H1 (cell line): ENCODE measurements at regions of chr2 and their contacts with region 1.

Region 1: GRCh38 chr2:46984642-46985476 is 69.3 kb upstream of the MCFD2 start:
- DNase-seq: no peak
- H3K4me3 ChIP-seq: no peak overlapping the region
- H3K27ac ChIP-seq: no peak overlapping the region
- H3K4me1 ChIP-seq: peaks cover 0 to 13% (median 5%) of the 10 kb centered on the region in 4 experiments; a peak in 4 of 7 replicates
- H3K27me3 ChIP-seq: no peaks in the 10 kb centered on the region
- CTCF ChIP-seq: no peak
- EP300 ChIP-seq: no peak
- POLR2A ChIP-seq: no peak
- RAD21 ChIP-seq: no peak

Region 2: DNA sequence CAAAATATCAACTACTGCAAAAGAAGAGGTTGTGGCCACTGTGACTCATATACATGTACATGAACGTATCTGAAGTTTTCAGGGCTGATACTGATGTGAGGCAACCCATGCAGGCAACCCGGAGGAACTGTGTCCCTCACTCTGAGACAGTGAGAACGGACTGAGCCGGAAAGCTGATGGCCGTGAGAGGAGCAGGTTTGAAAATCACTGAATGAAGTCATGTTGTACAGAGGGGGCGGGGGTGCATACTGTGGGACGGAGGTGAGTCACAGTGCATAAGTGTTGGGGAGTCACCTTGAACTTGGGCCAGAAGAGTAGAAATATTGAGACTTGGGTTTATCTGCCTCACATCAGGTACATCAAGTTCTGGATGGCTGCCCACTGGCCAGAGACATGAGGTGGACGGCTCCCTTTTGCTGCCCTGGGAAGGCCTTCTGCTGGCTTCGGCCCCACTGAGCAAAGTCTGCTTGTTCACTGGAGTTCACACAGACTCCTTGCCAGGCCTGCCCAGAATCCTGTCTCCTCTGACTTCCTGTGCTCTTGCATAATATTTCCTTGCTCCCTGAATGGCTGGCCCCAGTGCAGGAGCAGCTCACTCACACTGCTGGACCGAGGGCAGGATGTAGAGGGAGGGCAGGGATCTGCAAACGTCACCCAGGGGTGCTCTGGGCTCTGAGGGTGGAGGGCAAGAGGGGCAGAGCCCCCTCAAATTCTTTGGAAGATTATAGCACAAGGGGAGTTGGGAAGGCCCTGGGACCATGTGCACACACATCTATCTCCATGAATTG is 669.6 kb before region 1 on chr2:
- CTCF ChIA-PET with region 1: no interaction called
- POLR2A ChIA-PET with region 1: no interaction called
- DNase-seq: no peak
- H3K4me3 ChIP-seq: no peak overlapping the region
- H3K27ac ChIP-seq: no peak overlapping the region
- H3K4me1 ChIP-seq: peaks cover 0 to 2% (median 0%) of the 10 kb centered on the region in 4 experiments; a peak in 1 of 7 replicates
- H3K27me3 ChIP-seq: peaks cover 0 to 1% (median 0%) of the 10 kb centered on the region in 4 experiments; a peak in 1 of 7 replicates
- CTCF ChIP-seq: no peak
- EP300 ChIP-seq: no peak
- POLR2A ChIP-seq: no peak
- RAD21 ChIP-seq: no peak

Region 3: DNA sequence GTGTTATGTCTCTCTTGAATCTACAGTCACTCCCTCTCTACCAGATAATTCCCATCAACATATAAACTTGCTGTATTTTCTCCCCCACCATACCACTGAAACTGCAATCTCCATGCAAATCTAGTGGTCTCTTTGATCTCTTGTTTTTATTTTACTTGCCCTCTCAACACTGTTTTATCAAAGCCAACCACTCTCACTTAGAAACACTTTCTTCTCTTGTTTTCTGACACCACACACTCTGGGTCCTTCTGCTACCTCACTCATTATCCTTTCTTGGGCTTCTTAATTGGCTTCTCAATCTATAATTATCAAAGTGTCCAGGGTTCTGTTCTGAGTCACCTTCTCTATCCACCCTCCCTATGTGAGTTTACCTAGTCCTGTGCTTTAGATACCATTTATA is 67.2 kb before region 1 on chr2:
- CTCF ChIA-PET with region 1: interaction called, 13 read pairs
- POLR2A ChIA-PET with region 1: interaction called, 3 read pairs
- DNase-seq: no peak
- H3K4me3 ChIP-seq: no peak overlapping the region
- H3K27ac ChIP-seq: no peak overlapping the region
- H3K4me1 ChIP-seq: peaks cover 0 to 9% (median 2%) of the 10 kb centered on the region in 4 experiments; a peak in 4 of 7 replicates
- H3K27me3 ChIP-seq: no peaks in the 10 kb centered on the region
- CTCF ChIP-seq: no peak
- EP300 ChIP-seq: no peak
- POLR2A ChIP-seq: no peak
- RAD21 ChIP-seq: no peak

Region 4: DNA sequence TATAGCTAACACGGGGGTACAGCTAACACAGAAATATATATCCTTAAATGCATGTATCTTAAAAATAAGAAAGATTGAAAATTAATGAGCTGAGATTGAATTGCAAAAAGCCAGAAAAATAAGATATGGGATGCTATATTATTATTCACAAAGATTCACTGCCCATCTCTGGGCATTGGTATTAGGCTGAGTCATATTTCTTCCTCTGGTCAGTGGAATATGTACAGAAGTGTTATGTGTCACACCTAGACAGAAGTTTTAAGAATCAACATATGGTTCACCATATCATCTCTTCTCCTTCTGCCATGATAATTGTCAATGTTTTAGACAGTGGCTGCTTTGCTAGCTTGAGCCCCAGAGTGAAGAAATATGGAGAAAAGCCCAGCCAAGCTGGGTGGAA is 55.2 kb before region 1 on chr2:
- CTCF ChIA-PET with region 1: no interaction called
- POLR2A ChIA-PET with region 1: no interaction called
- DNase-seq: no peak
- H3K4me3 ChIP-seq: no peak overlapping the region
- H3K27ac ChIP-seq: no peak overlapping the region
- H3K4me1 ChIP-seq: no peaks in the 10 kb centered on the region; a peak in 1 of 7 replicates
- H3K27me3 ChIP-seq: no peaks in the 10 kb centered on the region
- CTCF ChIP-seq: no peak
- EP300 ChIP-seq: no peak
- POLR2A ChIP-seq: no peak
- RAD21 ChIP-seq: no peak

Region 5: DNA sequence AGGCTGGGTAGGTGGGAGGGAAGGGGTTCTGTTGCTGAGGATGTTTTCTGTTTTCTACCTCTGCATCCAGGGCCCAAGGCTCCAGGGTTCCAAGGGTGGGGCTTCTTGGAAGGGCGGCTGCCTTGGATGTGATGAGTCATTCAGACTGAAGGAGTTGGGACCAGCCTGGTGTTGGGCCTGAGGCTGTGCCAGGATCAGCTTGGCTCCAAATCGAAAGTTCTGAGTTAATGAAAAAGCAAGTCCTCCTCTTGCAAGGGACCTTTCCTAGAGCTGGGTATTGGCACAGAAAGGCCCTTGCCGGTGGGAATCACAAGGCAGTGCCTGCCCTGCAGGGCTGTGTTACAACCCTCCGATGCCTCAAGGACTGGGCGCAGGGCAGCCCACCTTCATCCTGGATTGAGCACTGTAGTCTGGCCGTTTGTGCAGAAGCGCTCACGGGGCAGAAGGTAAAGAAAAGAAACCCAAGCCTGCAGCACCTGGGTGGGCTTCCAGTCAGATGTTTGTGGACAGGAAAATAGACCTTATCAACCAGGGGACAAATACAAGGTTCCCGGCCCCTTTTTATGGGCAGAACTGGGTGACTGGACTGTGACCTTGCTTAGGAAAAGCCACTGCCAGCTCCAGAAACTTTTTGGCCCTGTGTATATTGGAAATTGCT is 16.7 kb before region 1 on chr2:
- CTCF ChIA-PET with region 1: interaction called, 14 read pairs
- POLR2A ChIA-PET with region 1: interaction called, 3 read pairs
- DNase-seq: no peak
- H3K4me3 ChIP-seq: no peak overlapping the region
- H3K27ac ChIP-seq: no peak overlapping the region
- H3K4me1 ChIP-seq: no peaks in the 10 kb centered on the region
- H3K27me3 ChIP-seq: no peaks in the 10 kb centered on the region
- CTCF ChIP-seq: no peak
- EP300 ChIP-seq: no peak
- POLR2A ChIP-seq: no peak
- RAD21 ChIP-seq: no peak

Region 6: GRCh38 chr2:46973673-46974072 is 11.2 kb before region 1 on chr2:
- CTCF ChIA-PET with region 1: interaction called, 14 read pairs
- POLR2A ChIA-PET with region 1: no interaction called
- DNase-seq: no peak
- H3K4me3 ChIP-seq: no peak overlapping the region
- H3K27ac ChIP-seq: no peak overlapping the region
- H3K4me1 ChIP-seq: no peaks in the 10 kb centered on the region; a peak in 1 of 7 replicates
- H3K27me3 ChIP-seq: no peaks in the 10 kb centered on the region
- CTCF ChIP-seq: no peak
- EP300 ChIP-seq: no peak
- POLR2A ChIP-seq: no peak
- RAD21 ChIP-seq: no peak